ENCODE measurements at regions of chr18 and their contacts with region 1.

Region 1: DNA sequence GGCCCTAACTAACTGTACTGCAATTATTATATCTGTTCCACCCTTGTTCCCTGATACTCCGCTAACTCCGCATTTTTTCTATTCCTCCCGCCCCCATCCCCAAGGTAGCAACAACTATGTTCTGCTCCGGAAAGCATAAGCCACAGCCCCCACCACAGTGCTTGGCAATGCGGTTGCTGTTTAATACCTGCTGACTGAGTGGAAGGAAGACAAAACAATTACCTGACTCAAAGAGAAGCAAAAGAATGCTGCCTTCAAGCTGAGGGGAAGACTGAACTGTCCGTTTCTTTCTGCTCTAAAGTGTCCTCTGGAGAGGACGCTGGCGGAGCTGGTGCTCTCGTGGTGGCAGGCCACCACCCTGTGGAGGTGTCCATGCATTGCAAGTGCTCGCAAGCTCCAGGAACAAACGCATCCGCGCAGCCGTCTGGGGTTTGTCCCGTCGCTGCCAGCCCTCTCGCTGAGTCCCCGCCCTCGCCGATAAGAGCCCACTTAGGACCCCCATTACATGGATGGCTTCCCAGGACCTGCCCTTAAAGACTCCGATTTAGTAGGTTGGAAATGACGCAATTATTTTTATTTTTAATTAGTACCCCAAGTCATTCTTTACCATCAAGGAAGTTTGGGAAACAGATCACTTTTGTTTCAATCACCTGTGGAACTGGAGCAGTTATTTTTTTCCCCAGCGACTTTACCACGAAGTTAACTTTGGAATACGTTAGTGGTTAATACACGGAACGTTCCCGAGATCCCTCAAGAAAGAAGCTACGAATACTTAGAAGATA is 1.6 kb upstream of the MYL12A start:
- DNase-seq: no peak
- ATAC-seq: peak; percentile 75
- H3K4me3 ChIP-seq: peak overlapping the region; percentile 91 to 98
- H3K27ac ChIP-seq: peak overlapping the region; percentile 100
- H3K4me1 ChIP-seq: peaks cover 16% of the 10 kb centered on the region
- H3K27me3 ChIP-seq: no peaks in the 10 kb centered on the region
- CTCF ChIP-seq: peak; percentile 97

Region 2: GRCh38 chr18:2027026-2027425 is 1219.0 kb before region 1 on chr18:
- CTCF ChIA-PET with region 1: no interaction called
- POLR2A ChIA-PET with region 1: no interaction called
- in situ Hi-C with region 1: no loop called
- intact Hi-C with region 1: no loop called
- DNase-seq: no peak
- ATAC-seq: no peak
- H3K4me3 ChIP-seq: no peak overlapping the region
- H3K27ac ChIP-seq: no peak overlapping the region
- H3K4me1 ChIP-seq: no peaks in the 10 kb centered on the region
- H3K27me3 ChIP-seq: no peaks in the 10 kb centered on the region
- CTCF ChIP-seq: no peak

Region 3: DNA sequence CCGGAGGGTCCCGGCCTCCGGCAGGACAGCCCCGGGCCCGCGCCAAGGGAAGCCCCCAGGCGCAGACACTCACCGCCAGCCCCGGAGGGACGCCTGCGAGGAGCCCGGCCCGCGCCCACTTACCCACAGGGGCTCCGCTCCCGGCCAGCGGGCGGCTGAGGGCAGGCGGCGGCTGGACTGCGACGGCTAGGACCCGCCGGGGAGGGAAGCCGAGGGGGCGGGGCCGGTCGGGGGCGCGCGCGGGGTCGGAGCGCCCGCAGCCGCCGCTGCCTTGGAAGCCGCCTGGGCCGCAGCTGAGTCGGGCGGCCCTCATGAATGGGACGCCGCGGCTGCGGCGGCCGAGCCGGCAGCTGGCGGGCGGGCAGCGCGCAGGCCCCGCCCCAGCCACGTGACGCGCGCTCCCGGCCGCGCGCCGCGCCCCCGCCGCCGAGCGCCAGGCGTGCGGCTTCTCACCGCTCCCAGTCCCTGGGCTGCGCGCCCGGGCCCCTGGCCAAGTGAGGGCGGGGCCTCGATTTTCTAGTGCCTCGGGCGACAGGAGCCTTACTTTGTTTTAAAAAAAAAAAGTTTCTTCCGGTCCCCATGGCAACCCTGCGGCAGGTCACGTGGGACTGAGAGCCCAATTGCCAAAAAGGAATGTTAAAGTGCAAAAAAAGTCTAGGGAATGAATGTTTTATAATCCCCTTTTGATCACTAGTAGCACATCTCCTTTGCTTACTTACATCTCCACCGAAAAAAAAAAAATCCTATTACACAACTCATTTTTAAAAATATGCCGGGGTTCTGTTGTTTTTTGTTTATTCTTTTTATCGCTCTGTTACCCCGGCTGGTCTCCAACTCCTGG is 232.9 kb before region 1 on chr18 and contains the start of gene LPIN2:
- CTCF ChIA-PET with region 1: interaction called, 4 read pairs
- POLR2A ChIA-PET with region 1: no interaction called
- in situ Hi-C with region 1: no loop called
- intact Hi-C with region 1: loop called (anchors 5 kb)
- DNase-seq: peak; percentile 67
- ATAC-seq: peak; percentile 92
- H3K4me3 ChIP-seq: peak within 1 kb of the TSS; percentile 63 to 81
- H3K27ac ChIP-seq: peak within 1 kb of the TSS; percentile 83
- H3K4me1 ChIP-seq: peaks cover 34% of the 10 kb centered on the region
- H3K27me3 ChIP-seq: no peaks in the 10 kb centered on the region
- CTCF ChIP-seq: no peak
- total RNA-seq, gene LPIN2: 38.3 TPM

Region 4: GRCh38 chr18:3151399-3152264 is 94.4 kb before region 1 on chr18:
- CTCF ChIA-PET with region 1: interaction called, 4 read pairs
- POLR2A ChIA-PET with region 1: interaction called, 3 read pairs
- in situ Hi-C with region 1: no loop called
- intact Hi-C with region 1: loop called (anchors 5 kb)
- DNase-seq: no peak
- ATAC-seq: no peak
- H3K4me3 ChIP-seq: no peak overlapping the region
- H3K27ac ChIP-seq: no peak overlapping the region
- H3K4me1 ChIP-seq: no peaks in the 10 kb centered on the region
- H3K27me3 ChIP-seq: no peaks in the 10 kb centered on the region
- CTCF ChIP-seq: peak; percentile 73

Region 5: DNA sequence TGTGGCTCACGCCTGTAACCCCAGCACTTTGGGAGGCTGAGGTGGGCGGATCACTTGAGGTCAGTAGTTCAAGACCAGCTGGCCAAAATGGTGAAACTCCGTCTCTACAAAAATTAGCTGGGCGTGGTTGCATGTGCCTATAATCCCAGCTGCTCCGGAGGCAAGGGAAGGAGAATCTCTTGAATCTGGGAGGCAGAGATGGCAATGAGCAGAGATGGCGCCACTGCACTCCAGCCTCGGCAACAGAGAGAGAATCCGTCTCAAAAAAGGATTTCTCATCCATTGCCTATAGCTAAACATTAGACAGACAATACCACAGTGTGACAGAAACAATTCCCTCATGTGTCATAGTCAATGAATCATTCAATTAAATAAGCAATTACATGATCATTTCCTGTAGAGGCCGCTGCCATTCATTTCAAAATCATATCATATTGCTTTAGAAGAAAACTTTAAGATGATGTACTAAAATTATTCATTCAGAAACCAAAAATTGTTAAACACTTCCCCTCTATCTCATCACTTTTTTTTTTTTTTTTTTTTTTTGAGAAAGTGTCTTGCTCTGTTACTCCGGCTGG is 134.4 kb after region 1 on chr18:
- CTCF ChIA-PET with region 1: no interaction called
- POLR2A ChIA-PET with region 1: interaction called, 11 read pairs
- in situ Hi-C with region 1: no loop called
- intact Hi-C with region 1: no loop called
- DNase-seq: no peak
- ATAC-seq: peak; percentile 71; the same call in 1 of the 2 replicates
- H3K4me3 ChIP-seq: no peak overlapping the region
- H3K27ac ChIP-seq: no peak overlapping the region; the same call in 1 of the 2 replicates
- H3K4me1 ChIP-seq: peaks cover 6% of the 10 kb centered on the region; the same call in 1 of the 2 replicates
- H3K27me3 ChIP-seq: no peaks in the 10 kb centered on the region
- CTCF ChIP-seq: peak; percentile 53